ENCODE measurements at regions of chr3 and their contacts with region 1.

Region 1: DNA sequence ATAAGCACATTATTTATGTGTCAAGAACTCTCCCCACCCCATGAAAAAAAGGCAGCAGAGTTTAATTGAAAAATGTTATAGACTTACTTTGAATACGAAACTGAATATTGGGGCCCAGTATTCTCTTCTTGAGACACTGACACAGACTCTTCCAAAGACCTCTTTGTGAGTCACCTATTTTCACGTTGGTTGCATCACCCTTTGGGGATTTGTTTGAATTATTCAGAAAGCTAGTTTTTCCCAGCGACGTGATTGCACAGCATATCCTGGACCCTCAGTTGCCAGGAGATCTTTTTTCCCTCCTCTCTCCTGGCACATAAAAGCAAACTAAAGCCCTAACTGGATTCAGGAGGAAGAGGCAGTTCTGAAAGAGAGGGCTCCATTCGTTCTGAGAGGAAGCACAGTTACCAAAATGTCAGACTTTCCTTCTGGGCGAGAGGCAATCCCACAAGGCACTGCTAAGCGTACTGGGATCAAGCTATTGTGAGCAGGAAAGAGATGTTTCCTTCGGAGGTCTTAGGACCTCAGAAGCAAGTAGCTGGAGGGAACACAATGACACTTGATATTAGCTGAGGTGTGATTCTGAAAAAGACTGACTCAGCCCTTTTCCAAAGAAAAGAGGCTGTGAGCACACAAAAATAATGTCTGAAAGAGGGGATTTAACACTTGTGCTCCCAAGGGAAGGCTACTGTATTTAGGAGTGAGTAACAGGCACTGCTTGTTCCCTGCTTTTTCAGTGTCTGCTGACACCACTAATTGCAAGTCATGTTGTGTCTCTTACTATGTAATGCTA is 65.8 kb upstream of the CADPS start:
- DNase-seq: no peak

Region 2: GRCh38 chr3:62863653-62864052 is 77.3 kb before region 1 on chr3:
- intact Hi-C with region 1: loop called in 1 of 2 experiments (anchors 10 kb)
- DNase-seq: no peak

Region 3: GRCh38 chr3:62911526-62911925 is 29.4 kb before region 1 on chr3:
- intact Hi-C with region 1: no loop called
- DNase-seq: no peak